ENCODE measurements at regions of chr9 and their contacts with region 1.

Region 1: GRCh38 chr9:132656299-132656698 is 13.5 kb downstream of the DDX31 start:
- DNase-seq: no peak
- H3K4me3 ChIP-seq: no peak overlapping the region
- CTCF ChIP-seq: no peak

Region 2: GRCh38 chr9:132575005-132575609 is 81.2 kb before region 1 on chr9:
- in situ Hi-C with region 1: loop called (anchors 5 kb)
- DNase-seq: peak; percentile 23
- H3K4me3 ChIP-seq: no peak overlapping the region
- CTCF ChIP-seq: peak; percentile 78

Region 3: GRCh38 chr9:132780230-132781007 is 124.1 kb after region 1 on chr9:
- in situ Hi-C with region 1: no loop called
- DNase-seq: no peak
- H3K4me3 ChIP-seq: no peak overlapping the region
- CTCF ChIP-seq: no peak

Measured in astrocyte of the cerebellum (primary cell).